A673 (cell line): ENCODE measurements at regions of chr11 and their contacts with region 1.

Region 1: GRCh38 chr11:96389720-96390487 is at the starts of genes CCDC82 and JRKL:
- DNase-seq: peak; percentile 99
- H3K4me3 ChIP-seq: peak within 1 kb of the TSS; percentile 74
- H3K27ac ChIP-seq: peak within 1 kb of the TSS; percentile 88
- H3K4me1 ChIP-seq: peaks cover 24% of the 10 kb centered on the region
- H3K27me3 ChIP-seq: no peaks in the 10 kb centered on the region
- CTCF ChIP-seq: no peak
- total RNA-seq, gene CCDC82: 30.5 and 33.1 TPM in 2 replicates
- total RNA-seq, gene JRKL: 11.0 and 12.7 TPM in 2 replicates

Region 2: DNA sequence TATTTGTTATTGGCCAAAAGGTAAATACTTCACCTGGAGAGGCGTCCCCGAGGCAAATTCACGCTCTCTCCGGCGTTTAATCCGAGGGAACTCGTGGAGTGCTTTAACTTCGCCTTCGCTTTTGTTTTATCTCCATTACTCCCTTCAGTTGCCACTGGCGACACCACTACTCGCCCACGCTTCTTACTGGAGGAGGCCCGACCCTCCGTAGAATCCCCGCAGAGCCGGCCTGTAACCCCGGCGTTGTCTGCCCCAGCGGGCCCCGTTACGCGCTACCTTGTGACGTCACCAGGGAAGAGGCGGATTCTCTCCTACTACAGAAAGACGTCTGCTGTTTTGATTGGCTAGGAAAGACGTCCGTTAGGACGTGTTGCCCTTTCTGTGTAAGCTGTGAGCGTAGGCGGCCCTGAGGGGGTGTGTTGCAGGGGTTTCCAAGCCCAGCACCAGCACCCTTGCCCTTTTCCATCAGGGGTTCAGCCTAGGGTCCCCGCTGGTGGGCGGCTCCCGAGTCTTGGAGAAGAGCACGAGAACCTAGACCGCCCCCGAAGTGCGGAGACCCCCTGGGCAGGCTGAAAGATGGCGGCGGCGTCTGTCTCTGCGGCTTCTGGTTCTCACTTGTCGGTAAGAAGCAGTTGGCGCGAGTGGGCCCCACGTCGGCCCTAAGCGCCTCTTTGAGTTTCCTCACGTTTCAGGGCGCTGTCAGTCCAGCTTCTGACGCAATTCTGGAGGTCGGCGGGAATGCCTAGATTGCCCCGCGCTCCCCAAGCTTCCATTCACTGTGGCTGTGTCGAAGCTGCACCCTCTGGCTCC is 599.6 kb before region 1 on chr11 and contains the start of gene CEP57:
- CTCF ChIA-PET with region 1: interaction called, 4 read pairs
- POLR2A ChIA-PET with region 1: interaction called, 3 read pairs
- intact Hi-C with region 1: loop called (anchors 2 kb)
- DNase-seq: peak; percentile 99
- H3K4me3 ChIP-seq: peak within 1 kb of the TSS; percentile 91
- H3K27ac ChIP-seq: peak within 1 kb of the TSS; percentile 97
- H3K4me1 ChIP-seq: peaks cover 47% of the 10 kb centered on the region
- H3K27me3 ChIP-seq: no peaks in the 10 kb centered on the region
- CTCF ChIP-seq: no peak
- total RNA-seq, gene CEP57: 72.3 and 79.8 TPM in 2 replicates

Region 3: GRCh38 chr11:95849087-95849825 is 540.6 kb before region 1 on chr11:
- CTCF ChIA-PET with region 1: interaction called, 29 read pairs
- POLR2A ChIA-PET with region 1: no interaction called
- intact Hi-C with region 1: no loop called
- DNase-seq: peak; percentile 77
- H3K4me3 ChIP-seq: no peak overlapping the region
- H3K27ac ChIP-seq: no peak overlapping the region
- H3K4me1 ChIP-seq: no peaks in the 10 kb centered on the region
- H3K27me3 ChIP-seq: no peaks in the 10 kb centered on the region
- CTCF ChIP-seq: peak; percentile 66

Region 4: GRCh38 chr11:96012086-96012824 is 377.6 kb before region 1 on chr11:
- CTCF ChIA-PET with region 1: interaction called, 3 read pairs
- POLR2A ChIA-PET with region 1: no interaction called
- intact Hi-C with region 1: loop called (anchors 5 kb)
- DNase-seq: peak; percentile 86
- H3K4me3 ChIP-seq: no peak overlapping the region
- H3K27ac ChIP-seq: no peak overlapping the region
- H3K4me1 ChIP-seq: peaks cover 14% of the 10 kb centered on the region
- H3K27me3 ChIP-seq: no peaks in the 10 kb centered on the region
- CTCF ChIP-seq: peak; percentile 84

Region 5: GRCh38 chr11:96062134-96062533 is 327.8 kb before region 1 on chr11:
- CTCF ChIA-PET with region 1: no interaction called
- POLR2A ChIA-PET with region 1: no interaction called
- intact Hi-C with region 1: no loop called
- DNase-seq: peak; percentile 93
- H3K4me3 ChIP-seq: no peak overlapping the region
- H3K27ac ChIP-seq: no peak overlapping the region
- H3K4me1 ChIP-seq: peaks cover 30% of the 10 kb centered on the region
- H3K27me3 ChIP-seq: no peaks in the 10 kb centered on the region
- CTCF ChIP-seq: no peak

Region 6: GRCh38 chr11:96162816-96163499 is 226.9 kb before region 1 on chr11:
- CTCF ChIA-PET with region 1: no interaction called
- POLR2A ChIA-PET with region 1: no interaction called
- intact Hi-C with region 1: loop called (anchors 5 kb)
- DNase-seq: peak; percentile 100
- H3K4me3 ChIP-seq: no peak overlapping the region
- H3K27ac ChIP-seq: peak overlapping the region; percentile 66
- H3K4me1 ChIP-seq: peaks cover 91% of the 10 kb centered on the region
- H3K27me3 ChIP-seq: no peaks in the 10 kb centered on the region
- CTCF ChIP-seq: no peak

Region 7: DNA sequence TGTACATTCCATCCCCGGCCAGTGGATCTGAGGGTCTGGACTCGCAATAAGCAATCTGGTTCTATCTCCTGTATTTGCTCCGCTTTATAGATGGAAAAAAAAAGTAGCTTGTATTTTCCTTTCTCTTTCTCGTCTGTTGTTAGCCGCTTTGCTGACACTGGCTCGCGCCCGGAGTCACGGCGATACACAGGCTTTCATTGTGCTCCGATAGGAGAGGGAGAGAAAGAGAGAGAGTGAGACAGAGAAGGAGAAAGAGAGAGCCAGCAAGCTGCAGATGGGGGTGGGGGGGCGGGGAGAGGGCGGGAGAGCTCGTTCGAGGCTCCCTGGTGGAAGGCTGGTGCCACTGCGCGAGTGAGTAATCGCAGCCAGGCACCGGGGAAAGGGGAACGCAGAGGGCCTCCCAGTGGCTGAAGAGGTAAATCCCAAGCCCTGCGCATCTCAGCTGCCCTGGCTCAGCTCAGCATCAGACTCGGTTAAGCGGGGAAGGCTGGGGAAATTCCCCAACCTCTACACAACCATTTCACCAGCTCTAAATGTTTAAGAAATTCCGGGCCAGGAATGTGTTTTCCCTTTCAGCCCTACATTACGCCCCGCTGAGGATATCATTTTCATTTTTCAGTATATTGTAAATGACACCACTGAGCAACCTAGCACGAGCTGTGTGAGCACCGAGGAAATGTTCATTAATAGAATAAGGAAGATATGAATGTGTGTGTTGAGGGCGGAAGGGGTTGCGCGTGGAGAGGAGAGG is 46.8 kb before region 1 on chr11 and contains the start of gene MAML2:
- CTCF ChIA-PET with region 1: interaction called, 12 read pairs
- POLR2A ChIA-PET with region 1: interaction called, 5 read pairs
- intact Hi-C with region 1: no loop called
- DNase-seq: peak; percentile 99
- H3K4me3 ChIP-seq: peak within 1 kb of the TSS; percentile 61
- H3K27ac ChIP-seq: peak within 1 kb of the TSS; percentile 66
- H3K4me1 ChIP-seq: peaks cover 36% of the 10 kb centered on the region
- H3K27me3 ChIP-seq: no peaks in the 10 kb centered on the region
- CTCF ChIP-seq: peak; percentile 90
- total RNA-seq, gene MAML2: 6.4 and 7.9 TPM in 2 replicates